K562 (cell line): ENCODE measurements at regions of chr6 and their contacts with region 1.

Region 1: DNA sequence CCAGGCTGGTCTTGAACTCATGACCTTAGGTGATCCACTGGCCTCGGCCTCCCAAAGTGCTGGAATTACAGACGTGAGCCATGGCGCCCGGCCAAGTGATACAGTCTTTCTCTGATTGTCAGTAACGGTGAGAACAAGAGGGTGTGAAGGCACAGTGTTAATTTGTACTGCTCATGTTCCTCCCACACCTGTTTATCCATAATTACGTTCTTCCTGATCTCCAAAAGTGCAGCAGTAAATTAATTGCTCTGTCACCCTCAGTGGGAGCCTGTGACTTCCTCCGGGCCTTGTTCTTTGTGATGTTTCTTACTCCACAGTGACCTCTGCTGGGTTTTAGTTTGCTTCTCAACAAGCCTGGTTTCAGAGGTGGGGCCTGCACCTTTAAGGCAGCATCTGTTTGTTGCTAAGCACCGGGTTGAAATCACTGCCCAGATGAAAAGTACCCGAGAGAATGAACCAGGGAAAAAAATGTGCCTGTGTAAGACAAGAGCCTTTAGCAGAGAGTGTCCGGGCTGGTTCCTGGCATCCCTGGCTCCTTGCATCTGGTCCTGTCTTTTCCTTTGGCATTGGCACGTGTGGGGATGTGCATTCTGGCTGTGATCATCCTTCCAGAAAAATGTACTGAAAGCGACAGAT is 89.1 kb upstream of the CLDN20 start:
- DNase-seq: peak; percentile 60 to 83 (median 72)
- ATAC-seq: peak; percentile 98
- H3K4me3 ChIP-seq: no peak overlapping the region
- H3K27ac ChIP-seq: no peak overlapping the region
- H3K4me1 ChIP-seq: peaks cover 0 to 2% of the 10 kb centered on the region in 2 experiments; a peak in 1 of 5 replicates
- H3K27me3 ChIP-seq: peaks cover 5 to 15% of the 10 kb centered on the region in 2 experiments; a peak in 3 of 5 replicates
- CTCF ChIP-seq: peak; percentile 71 to 79 (median 79)
- EP300 ChIP-seq: no peak
- POLR2A ChIP-seq: no peak
- RAD21 ChIP-seq: peak; percentile 79 to 94

Region 2: DNA sequence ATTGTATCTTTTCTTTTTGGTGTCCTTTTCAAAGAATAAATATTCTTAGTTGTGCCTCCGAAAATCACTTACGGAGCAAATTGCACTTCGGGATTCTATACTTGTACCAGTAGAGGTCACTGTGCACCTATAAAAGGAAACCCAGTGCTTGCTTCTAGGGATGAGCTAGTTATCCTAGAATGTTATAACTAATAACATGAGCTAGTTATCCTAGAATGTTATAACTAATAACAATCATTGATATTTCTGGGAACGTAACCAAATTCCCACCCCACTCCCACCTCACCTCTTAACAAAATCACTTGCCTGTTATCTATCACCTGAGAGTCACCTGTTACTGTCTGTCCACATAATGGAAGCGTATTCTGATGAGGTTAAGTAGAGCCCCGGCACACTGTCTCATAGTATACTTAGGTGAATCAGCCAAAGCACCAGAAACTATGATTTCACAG is 306.5 kb before region 1 on chr6:
- CTCF ChIA-PET with region 1: interaction called, 8 read pairs
- POLR2A ChIA-PET with region 1: no interaction called
- in situ Hi-C with region 1: no loop called
- intact Hi-C with region 1: loop called (anchors 1 kb)
- DNase-seq: peak; percentile 42 to 63 (median 50)
- ATAC-seq: peak; percentile 84
- H3K4me3 ChIP-seq: no peak overlapping the region
- H3K27ac ChIP-seq: no peak overlapping the region
- H3K4me1 ChIP-seq: no peaks in the 10 kb centered on the region; a peak in 1 of 5 replicates
- H3K27me3 ChIP-seq: no peaks in the 10 kb centered on the region
- CTCF ChIP-seq: peak; percentile 63 to 82 (median 75)
- EP300 ChIP-seq: no peak
- POLR2A ChIP-seq: no peak
- RAD21 ChIP-seq: peak; percentile 75 to 77

Region 3: DNA sequence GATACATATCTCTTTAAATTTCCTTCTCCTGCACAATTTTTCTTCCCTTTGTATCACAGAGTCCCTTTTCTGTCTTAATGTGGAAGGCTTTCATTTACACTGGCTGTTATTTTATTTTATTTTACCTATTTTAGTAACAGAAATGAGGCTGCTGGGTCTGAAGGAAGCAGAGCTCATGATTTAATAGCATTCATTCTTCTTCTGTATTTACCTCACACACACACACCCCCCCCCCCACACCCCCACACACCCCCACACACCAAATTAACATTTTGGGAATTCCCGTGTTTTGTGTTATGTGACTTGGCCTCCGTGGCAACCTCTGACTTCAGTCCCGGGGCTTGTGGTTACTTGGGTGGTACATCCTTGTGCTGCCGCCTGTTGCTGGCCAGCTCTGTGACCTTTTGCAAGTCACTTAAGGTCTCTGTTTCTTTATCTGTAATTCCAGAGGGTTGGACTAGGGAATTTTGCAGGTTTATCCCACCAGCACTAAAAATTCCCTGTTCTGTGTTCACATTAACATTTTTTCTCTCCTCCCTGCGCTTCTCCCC is 70.8 kb before region 1 on chr6:
- CTCF ChIA-PET with region 1: no interaction called
- POLR2A ChIA-PET with region 1: no interaction called
- in situ Hi-C with region 1: no loop called
- intact Hi-C with region 1: no loop called
- DNase-seq: no peak
- ATAC-seq: no peak
- H3K4me3 ChIP-seq: no peak overlapping the region
- H3K27ac ChIP-seq: no peak overlapping the region
- H3K4me1 ChIP-seq: peaks cover 0 to 6% of the 10 kb centered on the region in 2 experiments; a peak in 3 of 5 replicates
- H3K27me3 ChIP-seq: peaks cover 33 to 50% of the 10 kb centered on the region in 2 experiments
- CTCF ChIP-seq: no peak
- EP300 ChIP-seq: no peak
- POLR2A ChIP-seq: no peak
- RAD21 ChIP-seq: no peak

Region 4: DNA sequence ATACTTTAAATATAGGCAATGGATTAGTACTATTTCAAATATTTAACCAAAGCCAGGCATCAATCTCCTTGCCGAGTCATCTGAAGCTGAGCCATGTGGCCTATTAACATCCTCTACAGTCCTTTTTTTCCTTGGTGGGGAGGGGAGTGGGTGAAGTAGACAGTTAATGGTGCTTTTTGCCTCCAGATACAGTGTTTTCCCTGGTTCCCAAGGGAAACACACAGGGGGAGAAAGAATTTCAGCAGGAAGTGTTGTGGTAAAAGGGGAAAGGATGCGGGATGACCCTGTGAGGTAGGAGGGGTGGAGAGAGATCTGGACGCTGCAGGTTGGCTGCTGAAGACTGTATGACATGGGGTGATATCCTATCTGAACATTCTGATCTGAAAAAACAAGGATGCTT is 98.7 kb after region 1 on chr6:
- CTCF ChIA-PET with region 1: no interaction called
- POLR2A ChIA-PET with region 1: no interaction called
- in situ Hi-C with region 1: no loop called
- intact Hi-C with region 1: loop called (anchors 1 kb)
- DNase-seq: peak in 3 of 4 experiments; percentile 8 to 27 (median 9)
- ATAC-seq: peak; percentile 50; the same call in 2 of the 3 replicates
- H3K4me3 ChIP-seq: no peak overlapping the region
- H3K27ac ChIP-seq: no peak overlapping the region
- H3K4me1 ChIP-seq: peaks cover 0 to 7% of the 10 kb centered on the region in 2 experiments; a peak in 2 of 5 replicates
- H3K27me3 ChIP-seq: no peaks in the 10 kb centered on the region
- CTCF ChIP-seq: no peak
- EP300 ChIP-seq: no peak
- POLR2A ChIP-seq: no peak
- RAD21 ChIP-seq: no peak